Gastrocnemius medialis (tissue), 4 donors: ENCODE measurements at regions of chr1 and their contacts with region 1.

Region 1: GRCh38 chr1:205121660-205122488 is at the start of gene RBBP5:
- DNase-seq: peak; percentile 94 to 97
- ATAC-seq: peak; percentile 98 to 99
- H3K4me3 ChIP-seq: peak within 1 kb of the TSS; percentile 84 to 94 (median 90)
- H3K27ac ChIP-seq: peak within 1 kb of the TSS; percentile 85 to 92 (median 88)
- H3K4me1 ChIP-seq: peaks cover 33 to 35% of the 10 kb centered on the region in 2 donors
- H3K27me3 ChIP-seq: no peaks in the 10 kb centered on the region
- CTCF ChIP-seq: peak; percentile 49 to 84 (median 60)
- POLR2A ChIP-seq: peak; percentile 74 to 78
- total RNA-seq, gene RBBP5: 14.4 to 25.1 (median 21.2) TPM

Region 2: GRCh38 chr1:205068457-205069040 is 53.3 kb before region 1 on chr1:
- in situ Hi-C with region 1: no loop called
- intact Hi-C with region 1: no loop called
- DNase-seq: no peak
- ATAC-seq: no peak
- H3K4me3 ChIP-seq: no peak overlapping the region
- H3K27ac ChIP-seq: no peak overlapping the region
- H3K4me1 ChIP-seq: no peaks in the 10 kb centered on the region
- H3K27me3 ChIP-seq: no peaks in the 10 kb centered on the region
- CTCF ChIP-seq: no peak
- POLR2A ChIP-seq: no peak

Region 3: GRCh38 chr1:205091043-205091740 is 30.7 kb before region 1 on chr1:
- in situ Hi-C with region 1: no loop called
- intact Hi-C with region 1: loop called (anchors 2 kb)
- DNase-seq: peak; percentile 70 to 86
- ATAC-seq: peak; percentile 100
- H3K4me3 ChIP-seq: peak overlapping the region in 1 of 4 donors; percentile 15
- H3K27ac ChIP-seq: peak overlapping the region; percentile 88 to 93 (median 88)
- H3K4me1 ChIP-seq: peaks cover 13 to 18% of the 10 kb centered on the region in 2 donors
- H3K27me3 ChIP-seq: no peaks in the 10 kb centered on the region
- CTCF ChIP-seq: no peak
- POLR2A ChIP-seq: peak in 1 of 2 donors; percentile 14

Region 4: GRCh38 chr1:205147191-205147835 is 25.4 kb after region 1 on chr1:
- in situ Hi-C with region 1: no loop called
- intact Hi-C with region 1: no loop called
- DNase-seq: no peak
- ATAC-seq: peak in 1 of 2 donors; percentile 51
- H3K4me3 ChIP-seq: no peak overlapping the region
- H3K27ac ChIP-seq: no peak overlapping the region
- H3K4me1 ChIP-seq: no peaks in the 10 kb centered on the region
- H3K27me3 ChIP-seq: no peaks in the 10 kb centered on the region
- CTCF ChIP-seq: no peak
- POLR2A ChIP-seq: no peak

Region 5: GRCh38 chr1:205172729-205173366 is 51.0 kb after region 1 on chr1:
- in situ Hi-C with region 1: no loop called
- intact Hi-C with region 1: loop called (anchors 2 kb)
- DNase-seq: peak in 1 of 2 donors; percentile 24
- ATAC-seq: peak; percentile 84
- H3K4me3 ChIP-seq: no peak overlapping the region
- H3K27ac ChIP-seq: peak overlapping the region; percentile 67 to 92 (median 76)
- H3K4me1 ChIP-seq: peaks cover 32 to 64% of the 10 kb centered on the region in 2 donors
- H3K27me3 ChIP-seq: no peaks in the 10 kb centered on the region
- CTCF ChIP-seq: no peak
- POLR2A ChIP-seq: no peak

Region 6: DNA sequence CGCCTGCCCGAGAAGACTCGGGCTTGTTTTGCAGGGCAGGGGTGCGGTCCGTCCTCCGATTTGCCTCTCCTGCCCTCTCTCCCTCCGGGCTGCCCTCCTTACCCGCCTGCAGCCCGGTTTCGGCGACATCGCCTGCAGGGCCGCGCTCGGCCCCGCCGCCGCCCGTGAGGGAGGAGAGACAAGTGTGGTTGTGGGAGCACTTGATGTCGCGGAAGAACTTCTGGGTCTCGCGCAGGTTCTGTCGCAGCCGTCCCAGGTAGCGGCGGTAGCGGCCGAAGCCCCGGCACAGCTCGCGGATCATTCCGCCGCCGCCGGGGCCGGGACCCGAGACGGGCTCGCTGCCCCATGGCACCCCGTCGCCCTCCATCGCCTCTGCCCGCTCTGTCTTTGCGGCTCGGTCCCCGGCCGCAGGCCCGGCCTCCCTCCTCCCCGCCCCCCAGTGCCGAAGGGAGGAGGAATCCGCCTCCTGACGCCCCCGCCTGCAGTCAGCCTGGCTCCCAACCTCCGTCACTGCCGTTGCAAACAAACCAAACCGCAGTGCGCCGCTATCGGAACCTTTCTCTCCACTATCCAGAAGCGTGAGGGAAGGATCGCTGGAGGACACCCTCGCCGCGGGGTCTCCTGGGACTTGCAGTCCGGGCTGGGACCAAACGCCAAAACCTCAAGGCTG is 89.4 kb after region 1 on chr1 and contains the start of gene DSTYK:
- in situ Hi-C with region 1: no loop called
- intact Hi-C with region 1: loop called (anchors 5 kb)
- DNase-seq: peak; percentile 91 to 92
- ATAC-seq: peak; percentile 96
- H3K4me3 ChIP-seq: peak within 1 kb of the TSS; percentile 67 to 98 (median 91)
- H3K27ac ChIP-seq: peak within 1 kb of the TSS; percentile 87 to 96 (median 92)
- H3K4me1 ChIP-seq: peaks cover 17 to 29% of the 10 kb centered on the region in 2 donors
- H3K27me3 ChIP-seq: no peaks in the 10 kb centered on the region
- CTCF ChIP-seq: no peak
- POLR2A ChIP-seq: peak; percentile 78 to 83
- total RNA-seq, gene DSTYK: 12.2 to 15.8 (median 13.9) TPM

Region 7: GRCh38 chr1:205227584-205228006 is 105.7 kb after region 1 on chr1 and contains the start of gene TMCC2:
- in situ Hi-C with region 1: no loop called
- intact Hi-C with region 1: no loop called
- DNase-seq: peak; percentile 70 to 80
- ATAC-seq: peak; percentile 24 to 48
- H3K4me3 ChIP-seq: peak within 1 kb of the TSS; percentile 55 to 71 (median 69)
- H3K27ac ChIP-seq: peak within 1 kb of the TSS; percentile 75 to 91 (median 84)
- H3K4me1 ChIP-seq: peaks cover 36 to 40% of the 10 kb centered on the region in 2 donors
- H3K27me3 ChIP-seq: no peaks in the 10 kb centered on the region
- CTCF ChIP-seq: peak in 1 of 5 experiments; percentile 10
- POLR2A ChIP-seq: peak; percentile 44 to 48
- total RNA-seq, gene TMCC2: 1.1 to 7.6 (median 5.6) TPM